ENCODE measurements at regions of chr2 and their contacts with region 1.

Region 1: GRCh38 chr2:194730266-194730665 is 926.8 kb upstream of the SLC39A10 start:
- DNase-seq: peak; percentile 47
- ATAC-seq: peak; percentile 70
- H3K4me3 ChIP-seq: no peak overlapping the region
- H3K27ac ChIP-seq: no peak overlapping the region
- H3K4me1 ChIP-seq: peaks cover 4% of the 10 kb centered on the region; the same call in 1 of the 2 replicates
- H3K27me3 ChIP-seq: no peaks in the 10 kb centered on the region
- CTCF ChIP-seq: no peak

Region 2: DNA sequence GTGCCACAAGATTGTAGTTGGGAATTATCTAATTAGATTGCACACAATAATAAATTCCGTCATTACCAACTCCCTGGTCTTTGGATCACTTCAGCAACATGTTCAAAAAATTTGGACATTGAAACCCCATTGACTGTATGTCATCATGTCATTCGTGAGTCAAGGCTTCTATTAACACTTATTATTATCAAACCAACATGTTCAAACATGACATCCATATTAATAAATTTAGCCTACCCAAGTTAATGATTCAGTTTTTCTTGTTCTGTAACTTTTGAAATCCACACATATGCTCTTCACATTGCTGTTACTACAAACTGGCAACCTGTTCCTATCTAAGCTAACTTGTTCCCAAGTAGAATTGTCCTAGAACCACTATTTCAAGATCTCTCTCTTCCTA is 216.0 kb before region 1 on chr2:
- CTCF ChIA-PET with region 1: no interaction called
- POLR2A ChIA-PET with region 1: interaction called, 14 read pairs
- intact Hi-C with region 1: no loop called
- DNase-seq: no peak
- ATAC-seq: no peak
- H3K4me3 ChIP-seq: no peak overlapping the region
- H3K27ac ChIP-seq: no peak overlapping the region
- H3K4me1 ChIP-seq: no peaks in the 10 kb centered on the region
- H3K27me3 ChIP-seq: no peaks in the 10 kb centered on the region
- CTCF ChIP-seq: no peak

Region 3: DNA sequence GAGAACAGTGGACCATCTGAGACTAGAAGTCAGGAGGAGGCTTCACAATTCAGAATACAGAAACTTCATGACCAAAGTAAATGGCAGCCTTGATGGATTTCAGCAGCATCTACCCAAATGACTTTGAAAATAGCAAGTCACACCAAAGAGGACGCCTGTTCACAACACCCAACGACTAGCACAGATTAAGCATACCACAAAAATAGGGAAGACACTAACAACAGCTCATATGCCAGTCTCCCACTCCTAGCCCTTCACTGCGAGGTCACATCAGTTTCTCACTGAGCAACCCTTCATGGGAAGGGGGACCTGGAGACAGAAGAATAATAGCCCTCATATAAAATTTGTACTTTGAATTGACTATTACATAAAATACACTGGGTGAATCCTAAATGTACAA is 698.4 kb after region 1 on chr2:
- CTCF ChIA-PET with region 1: no interaction called
- POLR2A ChIA-PET with region 1: no interaction called
- intact Hi-C with region 1: no loop called
- DNase-seq: no peak
- ATAC-seq: no peak
- H3K4me3 ChIP-seq: no peak overlapping the region
- H3K27ac ChIP-seq: no peak overlapping the region
- H3K4me1 ChIP-seq: no peaks in the 10 kb centered on the region
- H3K27me3 ChIP-seq: no peaks in the 10 kb centered on the region
- CTCF ChIP-seq: no peak